CD4-positive, alpha-beta T cell (primary cell): ENCODE measurements at regions of chr17 and their contacts with region 1.

Region 1: GRCh38 chr17:76714822-76715495 is 4.2 kb upstream of the MXRA7 start:
- DNase-seq: peak; percentile 64 to 87 (median 79)
- ATAC-seq: no peak
- H3K4me3 ChIP-seq: no peak overlapping the region
- H3K4me3 Mint-ChIP-seq: peak overlapping the region; percentile 3
- H3K27ac ChIP-seq: no peak overlapping the region
- H3K27ac Mint-ChIP-seq: peak overlapping the region; percentile 96
- H3K4me1 ChIP-seq: peaks cover 33% of the 10 kb centered on the region
- H3K4me1 Mint-ChIP-seq: peaks cover 42% of the 10 kb centered on the region
- H3K27me3 ChIP-seq: no peaks in the 10 kb centered on the region
- H3K27me3 Mint-ChIP-seq: no peaks in the 10 kb centered on the region
- CTCF ChIP-seq: peak; percentile 88

Region 2: DNA sequence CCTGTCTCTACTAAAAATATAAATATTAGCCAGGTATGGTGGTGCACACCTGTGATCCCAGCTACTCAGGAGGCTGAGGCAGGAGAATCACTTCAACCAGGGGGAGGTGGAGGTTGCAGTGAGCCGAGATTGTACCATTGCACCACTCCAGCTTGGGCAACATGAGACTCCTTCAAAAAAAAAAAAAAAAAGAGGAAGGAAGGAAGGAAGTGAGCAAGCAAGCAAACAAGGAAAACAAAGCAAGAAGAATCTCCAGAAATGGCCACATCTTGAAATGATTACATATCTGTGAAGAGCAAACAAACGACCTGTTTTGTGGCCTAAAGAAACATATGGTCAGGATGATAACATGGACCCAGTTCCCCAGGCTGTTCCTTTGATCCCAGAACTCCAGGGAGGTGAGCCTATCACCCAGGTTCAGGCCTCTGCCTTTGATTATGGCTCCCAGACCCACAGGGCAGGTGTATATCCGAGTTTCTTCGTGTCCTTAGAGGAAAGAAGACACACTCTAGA is 744.9 kb before region 1 on chr17:
- CTCF ChIA-PET with region 1: no interaction called
- POLR2A ChIA-PET with region 1: no interaction called
- intact Hi-C with region 1: no loop called
- DNase-seq: peak in 1 of 14 experiments; percentile 31
- ATAC-seq: no peak
- H3K4me3 ChIP-seq: no peak overlapping the region
- H3K4me3 Mint-ChIP-seq: no peak overlapping the region
- H3K27ac ChIP-seq: no peak overlapping the region
- H3K27ac Mint-ChIP-seq: no peak overlapping the region
- H3K4me1 ChIP-seq: peaks cover 3% of the 10 kb centered on the region
- H3K4me1 Mint-ChIP-seq: peaks cover 18% of the 10 kb centered on the region
- H3K27me3 ChIP-seq: no peaks in the 10 kb centered on the region
- H3K27me3 Mint-ChIP-seq: no peaks in the 10 kb centered on the region
- CTCF ChIP-seq: no peak

Region 3: DNA sequence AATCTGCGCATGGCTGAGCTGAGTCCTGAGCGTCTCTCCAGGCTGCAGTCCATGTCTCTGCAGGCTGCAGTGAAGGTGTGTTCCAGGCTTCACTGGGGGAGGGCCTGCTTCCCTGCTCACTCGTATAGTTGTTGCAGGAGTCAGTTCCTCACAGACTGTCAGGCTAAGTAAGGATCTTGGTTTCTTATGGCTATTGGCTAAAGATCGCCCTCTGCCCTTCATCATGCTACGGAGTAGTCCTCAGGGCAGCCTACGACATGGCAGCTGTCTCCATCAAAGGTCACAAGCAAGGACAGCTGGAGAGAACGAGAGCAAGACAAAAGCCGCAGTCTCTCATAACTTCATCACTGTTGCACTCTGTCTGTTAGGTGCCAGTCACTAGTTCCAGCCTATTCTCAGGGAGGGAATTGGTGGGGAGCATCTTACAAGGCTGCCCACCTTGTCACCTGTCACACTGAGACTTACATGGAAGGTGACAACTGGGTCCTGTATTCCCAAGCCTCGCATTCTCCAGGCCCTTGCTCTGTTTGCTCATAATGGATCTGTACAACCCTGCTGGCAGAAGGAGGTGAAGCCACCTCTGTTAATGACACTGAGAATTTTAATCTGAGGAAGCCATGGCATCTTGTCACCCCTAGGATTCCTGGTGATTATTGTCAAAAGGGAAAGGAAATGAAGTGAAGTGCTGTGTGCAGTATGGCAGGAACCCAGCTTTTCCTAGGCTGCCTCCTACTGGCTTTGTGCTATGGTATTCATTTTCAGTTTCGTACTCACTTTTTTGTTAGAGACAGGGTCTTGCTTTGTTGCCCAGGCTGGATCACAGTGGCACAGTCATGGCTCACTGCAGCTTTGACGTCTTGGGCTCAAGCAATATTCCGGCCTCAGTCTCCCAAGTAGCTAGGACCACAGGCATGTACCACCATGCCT is 66.4 kb after region 1 on chr17:
- CTCF ChIA-PET with region 1: interaction called, 3 read pairs
- POLR2A ChIA-PET with region 1: no interaction called
- intact Hi-C with region 1: loop called in 1 of 2 experiments (anchors 5 kb)
- DNase-seq: peak in 4 of 14 experiments; percentile 19 to 42 (median 38)
- ATAC-seq: peak; percentile 62
- H3K4me3 ChIP-seq: no peak overlapping the region
- H3K4me3 Mint-ChIP-seq: no peak overlapping the region
- H3K27ac ChIP-seq: no peak overlapping the region
- H3K27ac Mint-ChIP-seq: peak overlapping the region; percentile 17
- H3K4me1 ChIP-seq: no peaks in the 10 kb centered on the region
- H3K4me1 Mint-ChIP-seq: no peaks in the 10 kb centered on the region
- H3K27me3 ChIP-seq: no peaks in the 10 kb centered on the region
- H3K27me3 Mint-ChIP-seq: no peaks in the 10 kb centered on the region
- CTCF ChIP-seq: no peak

Region 4: DNA sequence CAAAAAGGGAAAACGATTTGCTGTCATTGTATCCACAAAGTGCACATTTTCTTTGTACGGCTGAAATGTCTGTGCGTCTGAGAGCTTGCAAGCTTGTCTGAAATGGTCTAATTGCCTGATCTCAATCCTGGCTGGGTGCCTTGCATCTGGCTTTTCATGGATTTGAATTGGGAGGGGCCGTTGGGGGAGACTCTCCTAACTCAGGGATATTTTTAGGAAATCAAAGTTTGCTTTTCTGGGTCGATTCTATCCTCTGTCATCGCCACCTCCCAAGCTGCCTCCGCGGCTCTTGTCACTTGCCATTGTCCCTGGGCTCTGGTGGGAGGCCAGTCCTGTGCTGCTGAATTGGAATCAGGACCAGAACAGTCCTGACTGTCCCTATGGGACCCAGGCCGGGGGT is 119.9 kb after region 1 on chr17:
- CTCF ChIA-PET with region 1: no interaction called
- POLR2A ChIA-PET with region 1: no interaction called
- intact Hi-C with region 1: loop called in 1 of 2 experiments (anchors 5 kb)
- DNase-seq: no peak
- ATAC-seq: no peak
- H3K4me3 ChIP-seq: no peak overlapping the region
- H3K4me3 Mint-ChIP-seq: no peak overlapping the region
- H3K27ac ChIP-seq: no peak overlapping the region
- H3K27ac Mint-ChIP-seq: no peak overlapping the region
- H3K4me1 ChIP-seq: peaks cover 7% of the 10 kb centered on the region
- H3K4me1 Mint-ChIP-seq: peaks cover 3% of the 10 kb centered on the region
- H3K27me3 ChIP-seq: peaks cover 0 to 1% of the 10 kb centered on the region in 2 experiments
- H3K27me3 Mint-ChIP-seq: peaks cover 9% of the 10 kb centered on the region
- CTCF ChIP-seq: no peak